ENCODE measurements at regions of chr13 and their contacts with region 1.

Region 1: GRCh38 chr13:51803422-51804294 is at the start of gene DHRS12:
- DNase-seq: peak; percentile 81 to 94 (median 93)
- H3K4me3 ChIP-seq: peak within 1 kb of the TSS; percentile 68
- H3K4me3 Mint-ChIP-seq: peak within 1 kb of the TSS; percentile 91 to 99 (median 95)
- H3K27ac ChIP-seq: peak within 1 kb of the TSS; percentile 99
- H3K27ac Mint-ChIP-seq: peak within 1 kb of the TSS; percentile 98 to 100 (median 100)
- H3K4me1 ChIP-seq: peaks cover 39% of the 10 kb centered on the region
- H3K4me1 Mint-ChIP-seq: peaks cover 46 to 61% (median 50%) of the 10 kb centered on the region in 3 donors
- H3K27me3 ChIP-seq: no peaks in the 10 kb centered on the region
- H3K27me3 Mint-ChIP-seq: peaks cover 0 to 8% of the 10 kb centered on the region in 2 donors
- total RNA-seq, gene DHRS12: 7.1 to 7.2 TPM

Region 2: DNA sequence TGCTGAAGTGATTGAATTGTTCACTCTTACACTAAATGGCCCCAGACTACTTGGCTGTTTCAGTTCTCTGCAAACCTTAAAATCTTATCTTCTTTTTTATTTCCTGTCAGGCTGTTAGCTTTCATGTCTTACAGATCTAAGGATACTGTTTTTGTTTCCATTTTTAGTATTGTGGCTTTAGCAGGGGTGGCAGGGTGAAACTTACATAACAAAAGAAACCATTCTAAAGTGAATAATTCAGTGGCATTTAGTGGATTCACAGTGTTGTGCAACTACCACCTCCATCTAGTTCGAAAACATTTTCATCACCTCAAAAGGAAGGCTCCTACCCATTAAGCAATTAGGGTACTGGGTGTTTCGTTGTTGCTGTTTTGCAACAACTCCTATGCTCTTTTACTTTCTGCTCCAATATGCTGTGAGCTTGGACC is 21.5 kb after region 1 on chr13:
- CTCF ChIA-PET with region 1: interaction called, 12 read pairs
- POLR2A ChIA-PET with region 1: interaction called, 18 read pairs
- DNase-seq: peak in 2 of 5 donors; percentile 71 to 82
- H3K4me3 ChIP-seq: peak overlapping the region; percentile 78
- H3K4me3 Mint-ChIP-seq: peak overlapping the region; percentile 68 to 92 (median 86)
- H3K27ac ChIP-seq: no peak overlapping the region
- H3K27ac Mint-ChIP-seq: peak overlapping the region; percentile 90 to 97 (median 94)
- H3K4me1 ChIP-seq: peaks cover 96% of the 10 kb centered on the region
- H3K4me1 Mint-ChIP-seq: peaks cover 78 to 93% (median 91%) of the 10 kb centered on the region in 3 donors
- H3K27me3 ChIP-seq: no peaks in the 10 kb centered on the region
- H3K27me3 Mint-ChIP-seq: no peaks in the 10 kb centered on the region

Region 3: GRCh38 chr13:51832471-51833152 is 29.0 kb after region 1 on chr13:
- CTCF ChIA-PET with region 1: interaction called, 23 read pairs
- POLR2A ChIA-PET with region 1: no interaction called
- DNase-seq: peak; percentile 26 to 75 (median 60)
- H3K4me3 ChIP-seq: no peak overlapping the region
- H3K4me3 Mint-ChIP-seq: peak overlapping the region in 1 of 7 donors; percentile 24
- H3K27ac ChIP-seq: no peak overlapping the region
- H3K27ac Mint-ChIP-seq: peak overlapping the region in 5 of 8 donors; percentile 0 to 74 (median 38)
- H3K4me1 ChIP-seq: peaks cover 36% of the 10 kb centered on the region
- H3K4me1 Mint-ChIP-seq: peaks cover 17 to 39% (median 32%) of the 10 kb centered on the region in 3 donors
- H3K27me3 ChIP-seq: no peaks in the 10 kb centered on the region
- H3K27me3 Mint-ChIP-seq: no peaks in the 10 kb centered on the region

Measured in CD8-positive, alpha-beta memory T cell (primary cell).